Transverse colon (tissue), 4 donors: ENCODE measurements at regions of chr2 and their contacts with region 1.

Region 1: GRCh38 chr2:65411056-65411795 is 21.2 kb downstream of the SPRED2 start:
- DNase-seq: peak; percentile 48
- H3K4me3 ChIP-seq: peak overlapping the region in 1 of 4 donors; percentile 12
- H3K27ac ChIP-seq: peak overlapping the region; percentile 68 to 84 (median 78)
- H3K4me1 ChIP-seq: peaks cover 0 to 54% (median 49%) of the 10 kb centered on the region in 4 donors
- H3K27me3 ChIP-seq: no peaks in the 10 kb centered on the region
- CTCF ChIP-seq: no peak
- EP300 ChIP-seq: no peak
- POLR2A ChIP-seq: no peak

Region 2: DNA sequence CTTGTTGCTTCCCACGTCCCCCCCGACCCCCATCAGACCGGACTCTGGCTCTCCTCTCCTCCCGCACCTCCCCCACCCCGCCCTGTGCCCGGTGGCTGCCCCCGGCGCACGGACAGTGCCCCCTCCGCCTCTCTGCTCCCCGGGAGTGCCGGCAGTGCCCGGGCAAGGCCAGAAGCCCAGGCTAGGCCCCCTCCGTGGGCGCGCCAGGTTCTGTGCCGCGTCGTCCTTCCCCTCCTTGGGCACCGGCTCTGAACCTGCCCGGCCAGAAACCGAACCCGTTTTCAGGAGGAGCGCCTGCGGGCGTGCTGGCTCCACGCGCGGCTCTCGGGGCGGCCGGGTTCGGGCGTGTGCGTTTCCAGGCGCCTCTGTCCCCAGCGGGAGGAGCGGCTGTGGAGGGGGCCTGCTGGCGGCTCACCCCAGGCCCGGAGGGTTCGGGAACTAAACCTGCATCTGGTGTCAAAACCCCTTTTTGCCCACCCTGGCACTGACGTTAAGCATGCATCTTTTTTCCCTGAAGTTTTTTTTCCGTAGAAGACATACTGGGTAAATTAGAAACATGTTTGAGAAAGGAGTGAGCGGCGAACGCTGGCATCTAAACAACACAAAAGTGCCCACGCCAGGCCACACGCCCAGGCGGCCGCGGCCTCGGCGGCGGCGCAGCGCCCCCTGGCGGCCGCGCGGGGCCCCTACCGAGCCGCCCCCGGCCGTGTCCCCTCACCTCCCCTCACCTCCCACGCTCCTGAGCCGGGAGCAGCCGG is 546.0 kb before region 1 on chr2:
- in situ Hi-C with region 1: no loop called
- intact Hi-C with region 1: no loop called
- DNase-seq: peak; percentile 75
- H3K4me3 ChIP-seq: peak overlapping the region; percentile 28 to 72 (median 58)
- H3K27ac ChIP-seq: peak overlapping the region; percentile 82 to 90 (median 85)
- H3K4me1 ChIP-seq: peaks cover 2 to 28% (median 16%) of the 10 kb centered on the region in 4 donors
- H3K27me3 ChIP-seq: no peaks in the 10 kb centered on the region
- CTCF ChIP-seq: peak in 4 of 5 experiments; percentile 50 to 85 (median 73)
- EP300 ChIP-seq: no peak
- POLR2A ChIP-seq: no peak

Region 3: DNA sequence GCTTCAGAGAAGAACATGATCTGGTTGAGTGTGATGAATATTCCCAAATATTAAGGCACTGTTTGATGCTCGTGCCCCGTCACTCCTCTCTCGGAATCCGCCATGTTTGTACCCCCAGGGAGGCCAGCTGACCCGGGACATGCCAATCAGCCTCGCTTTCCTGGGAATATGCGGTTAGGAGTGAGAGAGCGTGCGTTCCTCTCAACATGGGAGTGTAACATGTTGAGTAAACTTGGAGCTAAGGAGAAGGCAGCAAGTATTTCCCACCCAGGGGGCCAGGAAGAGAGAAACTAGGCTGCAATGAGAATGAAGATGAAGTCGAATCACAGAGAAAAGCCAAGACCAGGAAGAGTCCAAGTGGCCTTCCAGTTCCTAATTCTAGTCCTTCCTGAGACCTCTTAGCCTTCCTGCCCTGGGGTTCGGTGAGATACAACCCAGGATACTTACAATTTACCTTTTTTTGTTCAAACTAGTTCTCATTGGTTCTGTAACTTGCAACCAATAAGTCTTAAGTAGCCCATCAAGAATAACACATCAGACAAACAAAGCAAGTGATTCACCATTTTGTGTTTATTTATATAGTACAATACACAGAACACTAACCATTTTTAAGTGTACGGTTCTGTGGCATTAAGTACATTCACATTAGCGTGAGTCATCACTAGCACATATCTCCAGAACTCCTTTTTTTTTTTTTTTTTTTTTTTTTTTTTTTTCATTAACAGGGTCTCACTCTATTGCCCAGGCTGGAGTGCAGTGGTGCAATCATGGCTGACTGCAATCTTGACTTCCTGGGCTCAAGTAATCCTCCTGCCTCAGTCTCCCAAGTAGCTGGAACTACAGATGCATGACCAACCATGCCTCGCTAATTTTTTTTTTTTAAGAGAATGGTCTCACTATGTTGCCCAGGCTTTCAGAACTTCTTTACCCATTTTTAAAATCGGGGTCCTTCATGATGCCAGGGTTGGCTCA is 458.4 kb before region 1 on chr2:
- in situ Hi-C with region 1: no loop called
- intact Hi-C with region 1: loop called (anchors 5 kb)
- DNase-seq: no peak
- H3K4me3 ChIP-seq: no peak overlapping the region
- H3K27ac ChIP-seq: no peak overlapping the region
- H3K4me1 ChIP-seq: peaks cover 0 to 14% (median 0%) of the 10 kb centered on the region in 4 donors
- H3K27me3 ChIP-seq: no peaks in the 10 kb centered on the region
- CTCF ChIP-seq: no peak
- EP300 ChIP-seq: no peak
- POLR2A ChIP-seq: no peak

Region 4: DNA sequence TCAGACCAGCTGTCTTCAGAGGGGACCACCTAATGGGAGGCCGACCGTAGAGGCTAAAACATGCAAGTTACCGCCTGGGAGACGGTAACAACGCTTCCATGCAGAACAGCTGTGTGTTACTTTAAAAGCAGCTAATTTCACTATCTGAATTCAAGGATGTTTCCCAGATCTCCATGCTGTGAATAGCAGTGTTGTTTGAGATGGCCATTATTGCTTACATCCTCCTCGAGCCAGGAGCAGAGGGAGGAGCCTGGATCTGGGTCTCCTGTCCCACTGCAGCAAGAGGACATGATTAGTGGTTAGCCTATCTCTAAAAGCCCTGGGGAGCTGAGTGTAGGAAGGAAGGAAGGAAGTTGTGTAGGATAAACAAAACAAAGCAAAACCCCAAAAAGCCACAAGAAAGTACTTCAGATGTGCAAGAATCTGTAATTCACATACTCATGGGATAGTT is 132.7 kb before region 1 on chr2:
- in situ Hi-C with region 1: no loop called
- intact Hi-C with region 1: no loop called
- DNase-seq: no peak
- H3K4me3 ChIP-seq: no peak overlapping the region
- H3K27ac ChIP-seq: no peak overlapping the region
- H3K4me1 ChIP-seq: no peaks in the 10 kb centered on the region
- H3K27me3 ChIP-seq: no peaks in the 10 kb centered on the region
- CTCF ChIP-seq: no peak
- EP300 ChIP-seq: no peak
- POLR2A ChIP-seq: no peak